Ovary (tissue), 10 donors: ENCODE measurements at regions of chr10 and their contacts with region 1.

Region 1: GRCh38 chr10:117174439-117175214 is 22.7 kb upstream of the KCNK18 start:
- DNase-seq: peak; percentile 48 to 75 (median 71)
- H3K4me3 ChIP-seq: peak overlapping the region; percentile 26
- H3K27ac ChIP-seq: no peak overlapping the region
- H3K4me1 ChIP-seq: peaks cover 7% of the 10 kb centered on the region
- H3K27me3 ChIP-seq: no peaks in the 10 kb centered on the region
- CTCF ChIP-seq: peak; percentile 33 to 62 (median 42)
- EP300 ChIP-seq: no peak
- POLR2A ChIP-seq: no peak

Region 2: GRCh38 chr10:116627386-116627933 is 547.2 kb before region 1 on chr10:
- intact Hi-C with region 1: loop called in 1 of 4 experiments (anchors 2 kb)
- DNase-seq: peak; percentile 38 to 67 (median 62)
- H3K4me3 ChIP-seq: peak overlapping the region; percentile 22
- H3K27ac ChIP-seq: no peak overlapping the region
- H3K4me1 ChIP-seq: peaks cover 11% of the 10 kb centered on the region
- H3K27me3 ChIP-seq: no peaks in the 10 kb centered on the region
- CTCF ChIP-seq: peak; percentile 56 to 71 (median 64)
- EP300 ChIP-seq: no peak
- POLR2A ChIP-seq: no peak

Region 3: GRCh38 chr10:116669832-116670644 is 504.6 kb before region 1 on chr10:
- intact Hi-C with region 1: loop called in 1 of 4 experiments (anchors 10 kb)
- DNase-seq: peak; percentile 41 to 65 (median 59)
- H3K4me3 ChIP-seq: peak overlapping the region; percentile 27
- H3K27ac ChIP-seq: peak overlapping the region in 1 of 2 donors; percentile 72
- H3K4me1 ChIP-seq: peaks cover 5% of the 10 kb centered on the region
- H3K27me3 ChIP-seq: no peaks in the 10 kb centered on the region
- CTCF ChIP-seq: no peak
- EP300 ChIP-seq: no peak
- POLR2A ChIP-seq: no peak

Region 4: DNA sequence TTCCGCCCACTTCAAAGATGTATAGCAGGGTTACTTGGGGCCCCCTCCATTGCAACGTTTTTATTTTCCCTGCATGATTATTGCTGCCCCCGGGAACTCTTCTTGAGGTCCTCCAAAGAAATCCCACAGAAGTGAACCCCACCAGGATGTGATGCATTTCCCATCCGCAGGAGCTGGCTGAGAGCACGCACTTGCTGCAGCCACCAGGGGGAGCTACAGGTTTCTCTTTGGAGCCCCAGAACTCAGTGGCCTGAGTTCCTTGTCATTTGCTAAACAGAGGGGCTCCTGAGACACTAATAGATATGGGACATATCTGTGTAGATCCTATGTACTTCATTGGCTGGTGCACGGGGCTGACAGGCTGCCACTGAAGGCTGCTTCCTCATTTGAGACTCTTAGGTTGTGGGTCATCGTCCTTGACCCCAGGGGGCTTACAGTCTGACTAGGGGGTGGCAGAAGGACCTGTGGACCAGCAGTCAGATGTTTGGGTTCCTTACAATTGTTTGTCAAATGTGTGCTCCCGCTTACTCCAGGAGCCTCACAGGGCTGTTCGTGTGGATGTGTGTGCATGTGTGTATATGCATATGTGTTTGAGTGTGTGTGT is 377.6 kb before region 1 on chr10:
- intact Hi-C with region 1: loop called in 3 of 4 experiments (anchors 1 to 5 kb)
- DNase-seq: peak; percentile 56 to 77 (median 69)
- H3K4me3 ChIP-seq: no peak overlapping the region
- H3K27ac ChIP-seq: no peak overlapping the region
- H3K4me1 ChIP-seq: no peaks in the 10 kb centered on the region
- H3K27me3 ChIP-seq: no peaks in the 10 kb centered on the region
- CTCF ChIP-seq: peak; percentile 36 to 50 (median 46)
- EP300 ChIP-seq: no peak
- POLR2A ChIP-seq: no peak